ENCODE measurements at regions of chr21 and their contacts with region 1.

Region 1: GRCh38 chr21:37366482-37367316 is at the start of gene DYRK1A:
- DNase-seq: peak; percentile 100
- ATAC-seq: peak; percentile 80
- H3K4me3 ChIP-seq: peak within 1 kb of the TSS; percentile 71 to 94 (median 87)
- H3K4me3 Mint-ChIP-seq: peak within 1 kb of the TSS; percentile 99
- H3K27ac ChIP-seq: peak within 1 kb of the TSS; percentile 93 to 98
- H3K27ac Mint-ChIP-seq: peak within 1 kb of the TSS; percentile 100
- H3K4me1 ChIP-seq: peaks cover 39 to 41% of the 10 kb centered on the region in 2 donors
- H3K4me1 Mint-ChIP-seq: peaks cover 48% of the 10 kb centered on the region
- H3K27me3 ChIP-seq: no peaks in the 10 kb centered on the region
- H3K27me3 Mint-ChIP-seq: no peaks in the 10 kb centered on the region
- CTCF ChIP-seq: no peak
- total RNA-seq, gene DYRK1A: 147 and 155 TPM in 2 replicates

Region 2: GRCh38 chr21:36060159-36060921 is 1306.4 kb before region 1 on chr21 and contains the start of gene SETD4:
- CTCF ChIA-PET with region 1: no interaction called
- POLR2A ChIA-PET with region 1: no interaction called
- intact Hi-C with region 1: loop called (anchors 10 kb)
- DNase-seq: peak; percentile 96
- ATAC-seq: peak; percentile 89
- H3K4me3 ChIP-seq: peak within 1 kb of the TSS; percentile 80 to 95 (median 95)
- H3K4me3 Mint-ChIP-seq: peak within 1 kb of the TSS; percentile 92
- H3K27ac ChIP-seq: peak within 1 kb of the TSS; percentile 73 to 90
- H3K27ac Mint-ChIP-seq: peak within 1 kb of the TSS; percentile 97
- H3K4me1 ChIP-seq: peaks cover 3 to 15% of the 10 kb centered on the region in 2 donors
- H3K4me1 Mint-ChIP-seq: peaks cover 22% of the 10 kb centered on the region
- H3K27me3 ChIP-seq: no peaks in the 10 kb centered on the region
- H3K27me3 Mint-ChIP-seq: no peaks in the 10 kb centered on the region
- CTCF ChIP-seq: no peak
- total RNA-seq, gene SETD4: 48.5 and 51.5 TPM in 2 replicates

Region 3: GRCh38 chr21:36319765-36320420 is 1046.8 kb before region 1 on chr21 and contains the start of gene MORC3:
- CTCF ChIA-PET with region 1: no interaction called
- POLR2A ChIA-PET with region 1: no interaction called
- intact Hi-C with region 1: loop called (anchors 5 kb)
- DNase-seq: peak; percentile 99
- ATAC-seq: peak; percentile 87
- H3K4me3 ChIP-seq: peak within 1 kb of the TSS; percentile 69 to 98 (median 94)
- H3K4me3 Mint-ChIP-seq: peak within 1 kb of the TSS; percentile 97
- H3K27ac ChIP-seq: peak within 1 kb of the TSS; percentile 86 to 92
- H3K27ac Mint-ChIP-seq: peak within 1 kb of the TSS; percentile 98
- H3K4me1 ChIP-seq: peaks cover 30 to 39% of the 10 kb centered on the region in 2 donors
- H3K4me1 Mint-ChIP-seq: peaks cover 54% of the 10 kb centered on the region
- H3K27me3 ChIP-seq: no peaks in the 10 kb centered on the region
- H3K27me3 Mint-ChIP-seq: no peaks in the 10 kb centered on the region
- CTCF ChIP-seq: no peak
- total RNA-seq, gene MORC3: 104 and 113 TPM in 2 replicates

Region 4: DNA sequence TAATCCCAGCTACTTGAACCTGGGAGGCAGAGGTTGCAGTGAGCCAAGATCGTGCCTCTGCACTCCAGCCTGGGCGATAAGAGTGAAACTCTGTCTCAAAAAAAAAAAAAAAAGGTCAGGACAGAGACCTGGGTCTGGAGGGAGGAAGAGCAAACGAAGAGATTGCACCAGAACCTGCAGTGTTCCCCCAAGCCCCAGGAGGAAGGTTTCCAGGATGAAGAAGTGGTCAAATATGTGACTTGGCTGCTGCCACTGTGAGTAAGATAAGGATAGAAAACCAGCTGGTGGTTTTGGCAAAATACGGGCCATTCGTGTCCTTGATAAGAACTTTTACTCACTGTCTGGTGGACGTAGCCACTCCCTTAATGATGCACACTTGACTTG is 929.0 kb before region 1 on chr21:
- CTCF ChIA-PET with region 1: no interaction called
- POLR2A ChIA-PET with region 1: no interaction called
- intact Hi-C with region 1: no loop called
- DNase-seq: no peak
- ATAC-seq: no peak
- H3K4me3 ChIP-seq: no peak overlapping the region
- H3K4me3 Mint-ChIP-seq: no peak overlapping the region
- H3K27ac ChIP-seq: no peak overlapping the region
- H3K27ac Mint-ChIP-seq: no peak overlapping the region
- H3K4me1 ChIP-seq: no peaks in the 10 kb centered on the region
- H3K4me1 Mint-ChIP-seq: no peaks in the 10 kb centered on the region
- H3K27me3 ChIP-seq: peaks cover 0 to 5% (median under 1%) of the 10 kb centered on the region in 4 experiments
- H3K27me3 Mint-ChIP-seq: peaks cover 17% of the 10 kb centered on the region
- CTCF ChIP-seq: no peak

Region 5: GRCh38 chr21:37208056-37208721 is 158.5 kb before region 1 on chr21:
- CTCF ChIA-PET with region 1: no interaction called
- POLR2A ChIA-PET with region 1: no interaction called
- intact Hi-C with region 1: loop called (anchors 1 kb)
- DNase-seq: peak; percentile 80
- ATAC-seq: peak; percentile 65
- H3K4me3 ChIP-seq: peak overlapping the region in 4 of 5 experiments; percentile 12 to 68 (median 34)
- H3K4me3 Mint-ChIP-seq: peak overlapping the region; percentile 76
- H3K27ac ChIP-seq: peak overlapping the region; percentile 54 to 79
- H3K27ac Mint-ChIP-seq: peak overlapping the region; percentile 78
- H3K4me1 ChIP-seq: peaks cover 27 to 34% of the 10 kb centered on the region in 2 donors
- H3K4me1 Mint-ChIP-seq: peaks cover 40% of the 10 kb centered on the region
- H3K27me3 ChIP-seq: no peaks in the 10 kb centered on the region
- H3K27me3 Mint-ChIP-seq: no peaks in the 10 kb centered on the region
- CTCF ChIP-seq: no peak

Region 6: GRCh38 chr21:37338671-37339551 is 27.8 kb before region 1 on chr21:
- CTCF ChIA-PET with region 1: no interaction called
- POLR2A ChIA-PET with region 1: no interaction called
- intact Hi-C with region 1: no loop called
- DNase-seq: no peak
- ATAC-seq: no peak
- H3K4me3 ChIP-seq: no peak overlapping the region
- H3K4me3 Mint-ChIP-seq: no peak overlapping the region
- H3K27ac ChIP-seq: no peak overlapping the region
- H3K27ac Mint-ChIP-seq: no peak overlapping the region
- H3K4me1 ChIP-seq: no peaks in the 10 kb centered on the region
- H3K4me1 Mint-ChIP-seq: no peaks in the 10 kb centered on the region
- H3K27me3 ChIP-seq: no peaks in the 10 kb centered on the region
- H3K27me3 Mint-ChIP-seq: peaks cover 12% of the 10 kb centered on the region
- CTCF ChIP-seq: no peak

Region 7: DNA sequence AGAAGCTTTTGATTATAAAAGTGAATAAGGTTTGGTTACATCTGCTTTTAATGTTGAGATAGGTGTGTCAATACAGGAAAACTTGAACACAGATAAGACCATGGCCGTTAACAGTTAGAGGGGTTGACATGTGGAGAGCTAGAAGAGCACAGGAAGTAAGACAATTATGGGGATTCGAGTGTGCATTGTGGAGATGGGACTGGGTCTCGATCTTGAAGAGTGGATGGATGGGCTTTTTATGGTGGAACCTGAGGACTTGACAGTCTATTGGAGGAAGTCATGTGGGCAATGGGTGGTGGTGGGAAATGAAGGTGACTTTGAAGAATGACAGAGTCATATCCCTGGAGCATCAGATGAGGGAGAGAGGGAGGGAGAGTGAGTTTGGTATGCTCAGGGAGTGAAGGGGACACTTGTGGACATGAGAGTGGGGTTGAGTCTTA is 12.0 kb after region 1 on chr21:
- CTCF ChIA-PET with region 1: interaction called, 4 read pairs
- POLR2A ChIA-PET with region 1: no interaction called
- intact Hi-C with region 1: loop called (anchors 1 kb)
- DNase-seq: no peak
- ATAC-seq: no peak
- H3K4me3 ChIP-seq: no peak overlapping the region
- H3K4me3 Mint-ChIP-seq: peak overlapping the region; percentile 59
- H3K27ac ChIP-seq: no peak overlapping the region
- H3K27ac Mint-ChIP-seq: no peak overlapping the region
- H3K4me1 ChIP-seq: peaks cover 57 to 77% of the 10 kb centered on the region in 2 donors
- H3K4me1 Mint-ChIP-seq: peaks cover 79% of the 10 kb centered on the region
- H3K27me3 ChIP-seq: no peaks in the 10 kb centered on the region
- H3K27me3 Mint-ChIP-seq: no peaks in the 10 kb centered on the region
- CTCF ChIP-seq: no peak

Region 8: GRCh38 chr21:37463083-37463801 is 96.5 kb after region 1 on chr21:
- CTCF ChIA-PET with region 1: interaction called, 5 read pairs
- POLR2A ChIA-PET with region 1: interaction called, 3 read pairs
- intact Hi-C with region 1: loop called (anchors 5 kb)
- DNase-seq: peak; percentile 68
- ATAC-seq: peak; percentile 72
- H3K4me3 ChIP-seq: no peak overlapping the region
- H3K4me3 Mint-ChIP-seq: peak overlapping the region; percentile 33
- H3K27ac ChIP-seq: no peak overlapping the region
- H3K27ac Mint-ChIP-seq: peak overlapping the region; percentile 69
- H3K4me1 ChIP-seq: peaks cover 52 to 64% of the 10 kb centered on the region in 2 donors
- H3K4me1 Mint-ChIP-seq: peaks cover 86% of the 10 kb centered on the region
- H3K27me3 ChIP-seq: no peaks in the 10 kb centered on the region
- H3K27me3 Mint-ChIP-seq: no peaks in the 10 kb centered on the region
- CTCF ChIP-seq: peak; percentile 66

Region 9: DNA sequence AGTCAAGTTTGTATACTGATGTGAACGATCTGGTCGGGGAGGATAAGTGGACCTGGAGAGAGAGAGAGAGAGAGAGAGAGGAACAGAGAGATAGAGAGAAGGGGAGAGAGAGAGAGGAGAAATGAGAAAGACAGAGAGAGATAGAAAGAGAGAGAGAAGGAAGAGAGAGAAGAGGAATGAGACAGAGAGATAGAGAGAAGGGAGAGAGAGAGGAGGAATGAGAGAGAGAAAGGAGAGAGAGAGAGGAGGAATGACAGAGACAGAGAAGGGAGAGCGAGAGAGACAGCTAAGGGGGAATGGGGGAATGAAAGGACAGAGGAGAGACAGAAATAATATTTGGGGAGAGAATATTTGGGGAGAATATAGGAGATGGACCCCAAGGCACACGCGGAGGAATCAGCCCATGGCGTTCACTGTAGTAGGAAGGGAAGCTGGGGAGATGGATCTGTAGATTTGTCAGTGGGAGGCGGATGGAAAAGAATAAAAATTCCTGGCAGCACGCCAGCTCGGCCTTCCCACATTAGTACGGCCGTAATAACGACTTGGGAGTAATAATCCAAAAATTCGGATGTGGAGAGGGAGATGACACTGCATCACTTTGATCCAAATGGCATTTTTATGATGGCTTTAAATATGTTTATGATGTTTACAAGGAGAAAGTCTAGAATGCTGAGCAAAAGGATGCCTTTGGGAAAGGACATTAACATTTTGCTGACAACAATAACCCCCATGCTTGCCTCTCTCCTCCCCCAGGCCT is 709.3 kb after region 1 on chr21:
- CTCF ChIA-PET with region 1: no interaction called
- POLR2A ChIA-PET with region 1: no interaction called
- intact Hi-C with region 1: no loop called
- DNase-seq: no peak
- ATAC-seq: no peak
- H3K4me3 ChIP-seq: no peak overlapping the region
- H3K4me3 Mint-ChIP-seq: no peak overlapping the region
- H3K27ac ChIP-seq: no peak overlapping the region
- H3K27ac Mint-ChIP-seq: no peak overlapping the region
- H3K4me1 ChIP-seq: no peaks in the 10 kb centered on the region
- H3K4me1 Mint-ChIP-seq: no peaks in the 10 kb centered on the region
- H3K27me3 ChIP-seq: no peaks in the 10 kb centered on the region
- H3K27me3 Mint-ChIP-seq: no peaks in the 10 kb centered on the region
- CTCF ChIP-seq: peak; percentile 12

Measured in B cell (primary cell).